Lower leg skin (tissue), 4 donors: ENCODE measurements at regions of chr16 and their contacts with region 1.

Region 1: DNA sequence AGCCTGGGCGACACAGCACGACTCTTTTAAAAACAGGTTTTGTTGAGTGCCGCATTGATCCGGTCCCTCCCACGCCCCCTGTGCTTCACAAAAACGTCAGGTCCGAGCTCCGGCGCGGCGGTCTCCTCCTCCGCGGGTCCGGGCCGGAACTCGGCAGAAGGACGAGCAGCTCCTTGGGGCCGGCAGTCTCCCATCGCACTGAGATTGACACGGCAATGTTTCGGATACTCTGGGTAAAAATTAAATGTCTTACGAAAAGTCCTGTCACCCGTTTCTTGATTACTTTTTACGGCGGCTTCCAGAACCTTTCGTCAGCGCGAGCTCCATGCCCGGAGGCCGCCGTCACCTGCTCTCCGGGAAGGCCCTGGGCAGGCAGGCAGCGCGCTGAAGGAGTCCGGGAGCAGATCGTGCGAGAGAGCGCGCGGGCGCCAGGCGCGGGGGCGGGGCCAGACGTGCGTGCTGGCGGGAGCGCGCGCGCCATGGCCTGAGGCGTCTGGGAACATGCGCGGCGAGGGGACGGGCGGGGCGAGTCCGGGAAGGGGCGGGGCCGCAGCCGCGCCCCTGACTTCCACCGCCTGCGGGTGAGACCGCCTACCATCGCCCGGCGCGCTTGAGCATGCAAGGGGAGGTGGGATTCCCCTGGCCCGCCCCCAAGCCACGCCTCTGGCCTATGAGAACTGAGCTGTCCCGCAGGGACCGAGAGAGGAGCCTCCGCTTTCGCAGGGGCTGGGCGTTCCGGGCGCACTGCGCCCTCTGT is 11.7 kb upstream of the SRL start:
- DNase-seq: peak; percentile 99 to 100
- H3K4me3 ChIP-seq: no peak overlapping the region
- CTCF ChIP-seq: no peak
- POLR2A ChIP-seq: no peak

Region 2: GRCh38 chr16:3983081-3983520 is 270.5 kb before region 1 on chr16:
- intact Hi-C with region 1: loop called (anchors 5 kb)
- DNase-seq: peak in 1 of 2 donors; percentile 36
- H3K4me3 ChIP-seq: no peak overlapping the region
- CTCF ChIP-seq: peak in 1 of 3 donors; percentile 40
- POLR2A ChIP-seq: no peak

Region 3: DNA sequence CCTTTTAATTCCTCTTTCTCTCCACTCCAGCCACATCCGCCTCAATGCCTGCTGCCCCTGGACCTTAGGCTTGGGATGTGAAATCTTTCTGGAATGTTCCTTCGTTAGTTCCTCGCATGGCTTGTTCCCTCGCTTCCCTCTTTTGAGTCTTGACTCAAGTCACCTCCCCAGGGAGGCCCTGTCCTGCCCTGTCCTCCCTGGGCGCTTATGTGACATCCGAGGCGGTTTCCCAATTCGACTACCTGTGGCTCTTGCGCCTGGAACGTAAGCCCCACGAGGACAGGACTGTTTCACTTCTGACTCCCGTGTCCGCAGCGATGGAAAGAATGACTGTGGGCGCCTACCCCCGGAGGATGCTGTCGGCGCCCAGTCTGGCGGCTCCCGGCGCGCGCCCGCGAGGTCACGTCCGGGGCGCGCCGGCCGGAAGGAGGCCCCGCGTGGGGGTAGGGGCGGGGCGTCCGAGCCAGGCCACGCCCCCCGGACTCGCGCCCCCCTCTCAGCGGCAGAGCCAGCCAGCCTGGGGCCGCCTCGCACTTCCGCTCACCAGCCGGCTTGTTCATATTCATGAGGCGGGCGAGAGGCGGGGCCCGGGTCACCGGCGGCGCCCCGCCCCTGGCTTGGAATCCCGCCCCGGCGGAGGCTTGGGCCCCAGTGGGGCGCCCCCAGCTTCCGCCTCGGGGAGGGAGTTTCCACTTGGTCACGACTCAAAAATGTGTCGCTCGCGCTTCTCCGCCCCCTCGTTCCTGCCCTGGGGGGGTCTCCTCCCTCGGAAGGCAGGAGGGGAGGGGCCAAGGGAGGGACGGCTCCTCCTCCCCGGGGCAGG is 53.9 kb after region 1 on chr16:
- intact Hi-C with region 1: no loop called
- DNase-seq: peak; percentile 84 to 98
- H3K4me3 ChIP-seq: peak overlapping the region; percentile 30
- CTCF ChIP-seq: no peak
- POLR2A ChIP-seq: no peak